Activated B cell treated with CpG ODN at 0.5 μM for 24 hours (primary cell): ENCODE measurements at regions of chr6 and their contacts with region 1.

Region 1: GRCh38 chr6:137866914-137867684 is at the start of gene TNFAIP3:
- DNase-seq: peak; percentile 97
- ATAC-seq: peak; percentile 78
- H3K4me3 Mint-ChIP-seq: peak within 1 kb of the TSS; percentile 96
- H3K27ac Mint-ChIP-seq: peak within 1 kb of the TSS; percentile 98
- H3K4me1 Mint-ChIP-seq: peaks cover 54% of the 10 kb centered on the region
- H3K27me3 Mint-ChIP-seq: no peaks in the 10 kb centered on the region
- CTCF ChIP-seq: no peak
- total RNA-seq, gene TNFAIP3: 207 and 226 TPM in 2 replicates

Region 2: GRCh38 chr6:137102851-137103492 is 764.1 kb before region 1 on chr6:
- CTCF ChIA-PET with region 1: no interaction called
- POLR2A ChIA-PET with region 1: no interaction called
- intact Hi-C with region 1: loop called (anchors 2 kb)
- DNase-seq: no peak
- ATAC-seq: peak; percentile 81
- H3K4me3 Mint-ChIP-seq: peak overlapping the region; percentile 80
- H3K27ac Mint-ChIP-seq: peak overlapping the region; percentile 98
- H3K4me1 Mint-ChIP-seq: peaks cover 93% of the 10 kb centered on the region
- H3K27me3 Mint-ChIP-seq: no peaks in the 10 kb centered on the region
- CTCF ChIP-seq: no peak

Region 3: GRCh38 chr6:137791281-137792159 is 75.6 kb before region 1 on chr6:
- CTCF ChIA-PET with region 1: interaction called, 107 read pairs
- POLR2A ChIA-PET with region 1: interaction called, 20 read pairs
- intact Hi-C with region 1: loop called (anchors 1 kb)
- DNase-seq: no peak
- ATAC-seq: no peak
- H3K4me3 Mint-ChIP-seq: no peak overlapping the region
- H3K27ac Mint-ChIP-seq: peak overlapping the region; percentile 68
- H3K4me1 Mint-ChIP-seq: peaks cover 42% of the 10 kb centered on the region
- H3K27me3 Mint-ChIP-seq: no peaks in the 10 kb centered on the region
- CTCF ChIP-seq: no peak

Region 4: GRCh38 chr6:137823826-137824555 is 43.1 kb before region 1 on chr6:
- CTCF ChIA-PET with region 1: interaction called, 7 read pairs
- POLR2A ChIA-PET with region 1: interaction called, 41 read pairs
- intact Hi-C with region 1: loop called (anchors 1 kb)
- DNase-seq: no peak
- ATAC-seq: peak; percentile 33
- H3K4me3 Mint-ChIP-seq: peak overlapping the region; percentile 46
- H3K27ac Mint-ChIP-seq: peak overlapping the region; percentile 77
- H3K4me1 Mint-ChIP-seq: peaks cover 67% of the 10 kb centered on the region
- H3K27me3 Mint-ChIP-seq: no peaks in the 10 kb centered on the region
- CTCF ChIP-seq: no peak

Region 5: GRCh38 chr6:137903933-137904821 is 37.1 kb after region 1 on chr6:
- CTCF ChIA-PET with region 1: interaction called, 4 read pairs
- POLR2A ChIA-PET with region 1: interaction called, 7 read pairs
- intact Hi-C with region 1: loop called (anchors 1 kb)
- DNase-seq: no peak
- ATAC-seq: peak; percentile 84
- H3K4me3 Mint-ChIP-seq: peak overlapping the region; percentile 59
- H3K27ac Mint-ChIP-seq: peak overlapping the region; percentile 79
- H3K4me1 Mint-ChIP-seq: peaks cover 43% of the 10 kb centered on the region
- H3K27me3 Mint-ChIP-seq: no peaks in the 10 kb centered on the region
- CTCF ChIP-seq: no peak

Region 6: DNA sequence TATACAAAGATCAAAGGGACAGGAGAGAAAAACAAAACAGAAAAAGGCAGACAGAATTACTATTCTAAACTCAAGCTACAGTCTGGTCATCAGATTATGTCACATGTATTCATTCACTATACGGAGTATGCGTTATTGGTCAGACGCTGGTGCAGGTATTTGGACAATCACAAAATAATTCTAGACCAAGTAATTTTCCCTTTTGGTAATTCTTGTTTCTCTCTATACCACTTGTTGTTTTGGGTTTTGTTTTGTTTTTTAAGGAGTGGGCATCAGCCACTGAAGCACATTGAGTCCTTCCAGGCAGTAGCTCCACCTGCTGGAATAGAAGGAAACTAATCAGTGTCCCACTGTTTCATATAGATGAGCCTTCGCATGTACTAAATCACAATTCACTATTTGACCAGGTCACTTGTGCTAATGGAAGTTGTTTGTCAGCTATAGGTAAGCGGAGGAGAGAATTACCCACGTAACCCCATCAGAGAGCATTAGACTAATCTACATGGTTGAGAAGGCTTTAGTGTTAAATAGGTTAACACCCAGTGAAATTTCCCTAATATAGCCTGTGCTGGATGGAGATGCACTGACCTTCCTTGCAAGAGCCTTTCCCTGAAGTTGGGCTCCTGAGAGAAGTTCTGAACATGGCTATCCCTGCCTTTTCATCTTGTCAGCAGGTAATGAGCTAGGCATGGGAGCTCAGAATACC is 77.8 kb after region 1 on chr6:
- CTCF ChIA-PET with region 1: interaction called, 132 read pairs
- POLR2A ChIA-PET with region 1: interaction called, 60 read pairs
- intact Hi-C with region 1: loop called (anchors 1 kb)
- DNase-seq: no peak
- ATAC-seq: peak; percentile 73
- H3K4me3 Mint-ChIP-seq: peak overlapping the region; percentile 17
- H3K27ac Mint-ChIP-seq: peak overlapping the region; percentile 27
- H3K4me1 Mint-ChIP-seq: peaks cover 30% of the 10 kb centered on the region
- H3K27me3 Mint-ChIP-seq: no peaks in the 10 kb centered on the region
- CTCF ChIP-seq: no peak

Region 7: GRCh38 chr6:138109042-138109997 is 242.2 kb after region 1 on chr6:
- CTCF ChIA-PET with region 1: no interaction called
- POLR2A ChIA-PET with region 1: no interaction called
- intact Hi-C with region 1: loop called (anchors 2 kb)
- DNase-seq: peak; percentile 50
- ATAC-seq: peak; percentile 73
- H3K4me3 Mint-ChIP-seq: peak overlapping the region; percentile 39
- H3K27ac Mint-ChIP-seq: no peak overlapping the region
- H3K4me1 Mint-ChIP-seq: peaks cover 17% of the 10 kb centered on the region
- H3K27me3 Mint-ChIP-seq: peaks cover 28% of the 10 kb centered on the region
- CTCF ChIP-seq: peak; percentile 93